ENCODE measurements at regions of chr5 and their contacts with region 1.

Region 1: DNA sequence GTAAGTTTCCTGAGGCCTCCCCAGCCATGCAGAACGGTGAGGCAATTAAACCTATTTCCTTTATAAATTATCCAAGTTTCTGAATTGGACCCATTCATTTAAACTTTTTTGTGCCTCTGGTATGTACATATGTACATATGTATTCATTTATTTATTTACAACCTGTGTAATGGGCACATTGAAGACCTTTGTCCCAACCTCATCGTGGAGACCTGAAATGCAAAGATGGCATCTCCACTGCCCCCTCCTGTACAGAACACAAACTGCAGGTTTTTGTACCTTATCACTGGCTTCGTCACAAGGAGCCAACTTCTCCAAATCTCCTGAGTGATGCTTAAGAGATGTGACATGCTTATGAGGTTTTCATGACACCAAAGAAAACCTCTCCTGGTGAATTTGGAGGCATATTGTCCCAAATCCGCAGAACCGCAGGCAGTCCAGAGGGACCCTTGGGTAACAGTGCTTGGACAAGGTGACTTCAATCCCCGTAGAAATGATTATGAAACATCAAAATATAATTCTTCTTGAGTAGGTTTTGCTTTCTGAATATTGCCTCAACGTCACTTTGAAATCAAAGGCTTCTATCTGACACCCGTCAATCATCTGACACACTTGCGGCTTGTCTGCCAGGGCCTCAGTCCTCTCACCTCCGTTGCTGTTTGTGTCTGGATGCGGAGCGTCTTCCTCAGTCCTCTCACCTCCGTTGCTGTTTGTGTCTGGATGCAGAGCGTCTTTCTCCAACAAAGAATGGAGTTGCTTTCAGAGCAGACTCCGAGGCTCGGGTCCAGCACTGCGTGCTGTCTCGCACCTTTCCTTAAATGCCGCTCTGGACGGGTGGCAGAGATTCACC is 135.0 kb upstream of the IRX4 start:
- DNase-seq: peak; percentile 33
- H3K4me3 ChIP-seq: no peak overlapping the region
- H3K27ac ChIP-seq: no peak overlapping the region
- H3K4me1 ChIP-seq: no peaks in the 10 kb centered on the region
- H3K27me3 ChIP-seq: peaks cover 44% of the 10 kb centered on the region
- CTCF ChIP-seq: peak; percentile 58

Region 2: GRCh38 chr5:1737790-1738405 is 279.9 kb before region 1 on chr5:
- CTCF ChIA-PET with region 1: no interaction called
- POLR2A ChIA-PET with region 1: no interaction called
- intact Hi-C with region 1: loop called (anchors 10 kb)
- DNase-seq: peak; percentile 53
- H3K4me3 ChIP-seq: no peak overlapping the region
- H3K27ac ChIP-seq: no peak overlapping the region
- H3K4me1 ChIP-seq: no peaks in the 10 kb centered on the region
- H3K27me3 ChIP-seq: peaks cover 26% of the 10 kb centered on the region
- CTCF ChIP-seq: peak; percentile 83

Region 3: DNA sequence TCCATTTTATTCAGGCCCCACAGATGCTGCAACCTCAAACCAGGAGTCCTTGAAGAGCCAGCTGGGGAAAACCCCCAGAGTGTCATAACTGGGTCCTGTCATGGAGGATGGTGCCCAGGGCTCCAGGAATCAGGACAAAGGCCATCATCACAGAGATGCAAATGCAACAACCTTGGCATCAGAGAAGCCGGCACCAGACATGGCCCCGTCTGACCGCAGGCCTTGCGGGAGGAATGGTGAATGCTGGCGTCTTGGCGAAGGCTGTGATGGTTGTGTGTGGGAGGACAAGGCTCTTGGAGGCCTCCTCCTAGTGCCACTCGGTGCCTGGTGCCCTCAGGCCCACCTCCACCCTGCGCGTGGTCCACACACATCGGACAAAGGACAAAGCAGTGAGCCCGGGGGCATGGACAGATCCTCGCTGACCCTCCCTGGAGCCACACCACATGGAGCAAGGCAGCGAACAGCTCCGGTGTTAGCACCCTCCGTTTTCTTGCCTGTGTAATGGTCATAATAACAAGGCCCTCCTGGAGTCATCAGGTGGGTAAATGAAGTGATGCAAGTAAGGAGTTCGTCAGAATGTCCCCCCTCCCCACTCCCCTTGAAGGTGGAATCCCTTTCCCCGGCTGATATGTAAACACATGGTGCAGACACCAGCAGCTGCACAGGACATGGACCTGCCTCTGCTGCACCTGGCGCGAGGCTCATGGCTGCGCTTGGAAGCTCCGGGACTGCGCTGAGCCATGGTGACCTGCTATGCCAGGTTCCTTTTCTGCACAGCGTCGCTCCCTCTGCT is 353.1 kb after region 1 on chr5:
- CTCF ChIA-PET with region 1: no interaction called
- POLR2A ChIA-PET with region 1: no interaction called
- intact Hi-C with region 1: no loop called
- DNase-seq: no peak
- H3K4me3 ChIP-seq: no peak overlapping the region
- H3K27ac ChIP-seq: no peak overlapping the region
- H3K4me1 ChIP-seq: no peaks in the 10 kb centered on the region
- H3K27me3 ChIP-seq: no peaks in the 10 kb centered on the region
- CTCF ChIP-seq: no peak